ENCODE measurements at regions of chr11 and their contacts with region 1.

Region 1: DNA sequence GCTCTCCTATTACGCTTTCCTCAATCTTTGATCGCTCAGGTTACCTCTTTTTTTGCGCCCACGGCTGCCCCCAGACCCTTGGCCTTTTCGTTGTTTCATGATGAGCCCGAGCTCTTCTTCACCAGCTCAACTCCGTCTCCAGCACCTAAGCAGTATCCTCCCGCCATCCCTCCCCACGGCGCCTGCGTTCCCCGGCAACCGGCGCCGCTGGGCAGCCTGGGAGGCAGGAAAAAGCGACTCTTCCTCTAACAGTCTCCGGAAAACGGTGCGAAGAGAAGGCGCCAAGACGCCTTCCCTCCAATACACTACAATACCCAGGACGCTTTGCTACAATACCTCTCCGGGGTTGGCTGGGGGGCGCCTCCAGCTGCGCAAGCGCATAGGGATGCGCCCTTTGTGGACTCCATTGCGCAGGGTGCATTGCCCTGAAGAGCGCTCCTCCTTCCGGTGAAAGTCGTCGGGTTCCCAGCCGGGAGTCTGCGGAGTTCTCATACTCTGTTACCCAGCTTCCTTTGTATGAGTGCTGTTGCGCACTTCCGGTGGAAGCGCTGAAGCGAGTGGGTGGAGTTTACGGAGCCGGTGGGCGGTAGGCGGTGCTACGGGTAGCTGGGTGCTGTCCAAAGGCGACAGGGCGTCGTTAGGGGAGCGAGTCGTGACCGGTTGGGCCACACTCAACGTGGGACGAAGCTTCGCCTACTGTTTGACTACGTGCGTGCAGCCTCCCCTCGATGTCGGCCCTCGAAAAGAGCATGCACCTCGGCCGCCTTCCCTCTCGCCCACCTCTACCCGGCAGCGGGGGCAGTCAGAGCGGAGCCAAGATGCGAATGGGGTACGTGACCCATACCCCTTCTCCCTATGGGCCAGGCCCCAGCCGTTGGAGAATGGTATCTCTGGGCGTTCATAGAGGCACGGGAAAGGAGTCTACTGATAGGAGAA is at the starts of genes C2CD3 and PPME1:
- DNase-seq: peak; percentile 100
- H3K4me3 Mint-ChIP-seq: no peak within 1 kb of the TSS
- H3K27ac Mint-ChIP-seq: no peak within 1 kb of the TSS
- H3K4me1 Mint-ChIP-seq: peaks cover 11% of the 10 kb centered on the region
- H3K27me3 Mint-ChIP-seq: no peaks in the 10 kb centered on the region
- total RNA-seq, gene C2CD3: 35.1 and 37.4 TPM in 2 replicates
- total RNA-seq, gene PPME1: 66.3 and 69.6 TPM in 2 replicates

Region 2: DNA sequence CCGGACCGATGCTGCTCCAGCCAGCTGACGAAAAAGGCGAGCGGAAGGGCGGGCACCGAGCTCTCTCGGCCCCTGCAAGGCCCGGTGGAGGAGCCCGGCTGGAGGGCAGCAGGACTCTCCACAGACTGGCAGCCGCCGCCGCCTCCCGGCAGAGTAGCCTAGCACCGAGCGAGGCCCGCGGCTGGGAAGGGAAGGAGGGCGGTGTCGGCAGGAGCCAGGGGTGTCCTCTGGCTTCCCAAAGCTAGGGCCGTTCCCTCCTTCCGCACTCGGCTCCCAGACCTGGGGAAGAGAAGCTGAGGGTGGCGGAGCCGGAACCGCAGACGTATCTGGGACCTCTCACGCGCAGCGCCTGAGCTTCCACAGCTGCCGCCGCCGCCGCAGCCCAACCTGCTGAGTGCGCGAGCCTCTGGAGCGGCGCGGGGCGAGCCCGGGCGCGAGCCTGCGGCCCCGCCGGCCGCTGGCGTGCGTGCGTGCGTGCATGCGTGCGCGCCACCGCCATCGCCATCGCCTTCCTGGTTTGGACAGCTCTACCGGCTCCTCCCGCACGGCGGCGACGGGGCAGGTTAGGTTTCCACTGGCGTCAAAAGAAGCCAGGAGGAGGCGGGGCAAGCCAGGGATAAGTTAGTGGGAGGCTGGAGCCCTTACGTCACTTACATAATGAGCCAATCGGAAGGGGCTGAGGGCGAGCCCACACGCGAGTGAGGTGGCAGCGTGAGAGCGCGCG is 410.1 kb before region 1 on chr11 and contains the start of gene RAB6A:
- intact Hi-C with region 1: loop called (anchors 1 kb)
- DNase-seq: peak; percentile 100
- H3K4me3 Mint-ChIP-seq: peak within 1 kb of the TSS; percentile 97
- H3K27ac Mint-ChIP-seq: peak within 1 kb of the TSS; percentile 92
- H3K4me1 Mint-ChIP-seq: peaks cover 32% of the 10 kb centered on the region
- H3K27me3 Mint-ChIP-seq: peaks cover 3% of the 10 kb centered on the region
- total RNA-seq, gene RAB6A: 74.3 and 79.5 TPM in 2 replicates

Region 3: DNA sequence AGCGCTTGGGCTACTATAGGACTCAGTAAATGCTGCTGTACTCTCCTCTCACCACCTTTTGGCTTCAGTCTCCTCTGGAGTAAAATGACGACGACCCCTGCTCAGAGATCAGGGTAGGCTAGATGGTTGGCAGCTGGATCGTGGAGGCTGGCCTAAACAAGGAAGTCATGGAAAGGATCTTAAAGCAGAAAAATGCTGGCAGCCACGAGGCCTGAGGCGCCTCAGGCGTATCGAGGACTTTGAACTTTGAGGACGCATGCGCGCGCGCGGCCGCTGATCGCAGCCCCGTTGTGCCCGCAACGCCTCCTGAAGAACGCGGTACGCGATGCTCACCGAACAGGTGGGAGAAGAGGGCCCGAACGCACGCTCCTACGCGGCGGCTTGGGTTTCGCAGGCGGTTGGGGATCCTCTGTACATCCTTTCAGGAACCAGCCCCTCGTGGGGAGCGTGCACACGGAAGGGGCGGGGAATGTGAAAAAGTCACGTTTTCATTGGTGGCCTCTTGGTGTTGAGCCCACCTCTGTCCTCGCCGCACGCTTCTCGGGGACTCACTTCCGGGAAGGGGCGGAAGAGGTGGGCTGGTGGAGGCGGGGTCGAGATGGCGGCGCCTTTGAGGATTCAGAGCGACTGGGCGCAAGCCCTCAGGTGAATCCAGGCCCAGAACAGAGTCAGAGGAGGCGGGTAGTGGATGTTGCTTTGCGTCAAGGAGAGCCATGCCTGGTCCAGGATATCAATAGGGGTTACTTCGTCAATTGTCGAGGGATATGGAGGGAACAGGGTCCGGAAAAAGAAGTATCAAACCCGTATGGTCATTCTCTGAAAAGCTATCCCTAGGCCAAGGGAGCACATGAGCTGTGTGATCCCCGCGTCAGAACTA is 294.3 kb before region 1 on chr11 and contains the starts of genes COA4 and PAAF1:
- intact Hi-C with region 1: loop called (anchors 1 kb)
- DNase-seq: peak; percentile 98
- H3K4me3 Mint-ChIP-seq: peak within 1 kb of the TSS; percentile 95
- H3K27ac Mint-ChIP-seq: peak within 1 kb of the TSS; percentile 98
- H3K4me1 Mint-ChIP-seq: peaks cover 26% of the 10 kb centered on the region
- H3K27me3 Mint-ChIP-seq: no peaks in the 10 kb centered on the region
- total RNA-seq, gene COA4: 92.7 and 98.0 TPM in 2 replicates
- total RNA-seq, gene PAAF1: 26.7 and 28.6 TPM in 2 replicates

Region 4: DNA sequence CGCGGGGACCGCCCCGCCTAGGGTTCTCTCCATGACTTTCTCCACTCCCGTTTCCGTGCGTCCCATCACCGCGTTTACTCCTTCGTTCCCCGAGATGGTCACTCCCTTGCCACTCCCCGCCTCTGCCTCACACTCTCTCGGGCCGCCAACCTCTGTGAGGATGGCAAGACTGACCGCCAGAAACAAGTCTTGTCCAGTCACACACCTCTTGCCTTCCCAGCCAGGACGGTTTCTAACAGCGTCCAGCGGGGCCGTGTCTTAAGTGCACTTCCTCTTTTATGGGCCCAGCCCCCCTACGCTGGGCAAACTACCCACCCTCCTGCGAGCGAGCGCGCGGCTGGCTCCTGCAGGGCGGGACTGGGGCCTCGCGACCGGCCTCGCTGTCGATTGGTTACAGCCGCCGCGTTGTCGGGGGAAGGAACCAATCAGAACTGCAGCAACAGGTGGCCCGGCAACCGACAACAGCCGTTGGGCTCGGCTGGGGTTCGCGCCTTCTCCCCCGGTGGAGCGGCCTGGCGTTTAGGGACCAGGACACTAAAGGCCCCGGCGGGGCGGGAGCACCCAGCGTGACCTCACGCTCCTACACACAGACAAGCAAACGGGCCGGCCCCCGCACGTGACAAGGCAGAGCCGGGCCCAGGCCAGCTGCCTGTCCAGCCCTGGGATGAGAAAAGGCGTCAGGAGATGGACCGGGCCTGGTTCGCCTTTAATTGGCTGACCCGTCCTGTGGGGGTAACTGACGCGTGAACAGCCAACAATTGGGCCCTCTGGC is 187.8 kb before region 1 on chr11:
- intact Hi-C with region 1: loop called (anchors 1 kb)
- DNase-seq: peak; percentile 98
- H3K4me3 Mint-ChIP-seq: peak overlapping the region; percentile 95
- H3K27ac Mint-ChIP-seq: peak overlapping the region; percentile 99
- H3K4me1 Mint-ChIP-seq: peaks cover 53% of the 10 kb centered on the region
- H3K27me3 Mint-ChIP-seq: no peaks in the 10 kb centered on the region

Region 5: DNA sequence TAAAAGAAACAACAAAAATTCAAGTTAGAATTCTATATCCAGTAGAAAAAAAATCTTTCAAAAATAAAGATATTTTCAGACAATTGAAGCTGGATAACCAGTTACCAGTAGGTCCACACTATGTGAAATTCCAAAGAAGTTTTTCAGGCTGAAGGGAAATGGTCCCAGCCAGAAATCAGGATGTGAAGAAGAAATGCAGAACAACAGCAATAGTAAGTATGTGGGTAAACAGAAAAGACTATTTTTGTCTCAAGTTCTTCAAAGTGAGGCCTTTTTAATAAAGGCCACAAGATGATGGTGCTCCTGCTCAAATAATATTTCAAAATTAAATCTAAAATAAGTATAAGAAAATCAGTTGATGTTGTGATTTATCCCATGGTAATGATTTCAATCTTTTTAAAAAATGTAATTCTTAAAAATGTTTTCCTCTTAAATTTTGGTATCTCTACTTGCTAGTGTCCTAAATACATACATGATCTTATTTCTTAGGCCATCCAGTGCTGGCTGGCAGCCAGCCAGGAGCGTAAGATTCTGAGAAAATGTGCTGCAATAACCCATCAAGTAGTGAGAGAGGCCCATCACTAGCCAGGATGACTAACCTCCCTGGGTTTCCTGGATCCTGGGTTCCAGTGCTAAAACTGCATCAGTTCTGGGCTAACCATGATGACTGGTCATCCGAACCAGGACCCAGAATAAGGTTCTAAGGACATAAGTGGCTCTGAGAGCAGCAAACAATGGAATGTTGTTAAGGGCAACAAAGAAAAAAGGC is 146.5 kb before region 1 on chr11:
- intact Hi-C with region 1: loop called (anchors 5 kb)
- DNase-seq: peak; percentile 66
- H3K4me3 Mint-ChIP-seq: no peak overlapping the region
- H3K27ac Mint-ChIP-seq: peak overlapping the region; percentile 65
- H3K4me1 Mint-ChIP-seq: peaks cover 35% of the 10 kb centered on the region
- H3K27me3 Mint-ChIP-seq: no peaks in the 10 kb centered on the region

Region 6: GRCh38 chr11:74185695-74186094 is 14.7 kb after region 1 on chr11:
- intact Hi-C with region 1: no loop called
- DNase-seq: no peak
- H3K4me3 Mint-ChIP-seq: no peak overlapping the region
- H3K27ac Mint-ChIP-seq: no peak overlapping the region
- H3K4me1 Mint-ChIP-seq: peaks cover 14% of the 10 kb centered on the region
- H3K27me3 Mint-ChIP-seq: no peaks in the 10 kb centered on the region

Region 7: GRCh38 chr11:74592441-74593362 is 421.7 kb after region 1 on chr11 and contains the start of gene POLD3:
- intact Hi-C with region 1: loop called (anchors 2 kb)
- DNase-seq: peak; percentile 98
- H3K4me3 Mint-ChIP-seq: peak within 1 kb of the TSS; percentile 96
- H3K27ac Mint-ChIP-seq: peak within 1 kb of the TSS; percentile 90
- H3K4me1 Mint-ChIP-seq: peaks cover 19% of the 10 kb centered on the region
- H3K27me3 Mint-ChIP-seq: peaks cover 6% of the 10 kb centered on the region
- total RNA-seq, gene POLD3: 53.5 and 53.6 TPM in 2 replicates